Dendritic cell treated with granulocyte-macrophage colony-stimulating factor and Interleukin-4, amounts not matched to agents 40 ng/mL and 50 ng/mL, for 4 days (primary cell): ENCODE measurements at regions of chr11 and their contacts with region 1.

Region 1: GRCh38 chr11:74018331-74019005 is 9.6 kb upstream of the UCP3 start:
- H3K4me3 Mint-ChIP-seq: peak overlapping the region; percentile 35
- H3K27ac Mint-ChIP-seq: no peak overlapping the region
- H3K4me1 Mint-ChIP-seq: no peaks in the 10 kb centered on the region
- H3K27me3 Mint-ChIP-seq: no peaks in the 10 kb centered on the region

Region 2: DNA sequence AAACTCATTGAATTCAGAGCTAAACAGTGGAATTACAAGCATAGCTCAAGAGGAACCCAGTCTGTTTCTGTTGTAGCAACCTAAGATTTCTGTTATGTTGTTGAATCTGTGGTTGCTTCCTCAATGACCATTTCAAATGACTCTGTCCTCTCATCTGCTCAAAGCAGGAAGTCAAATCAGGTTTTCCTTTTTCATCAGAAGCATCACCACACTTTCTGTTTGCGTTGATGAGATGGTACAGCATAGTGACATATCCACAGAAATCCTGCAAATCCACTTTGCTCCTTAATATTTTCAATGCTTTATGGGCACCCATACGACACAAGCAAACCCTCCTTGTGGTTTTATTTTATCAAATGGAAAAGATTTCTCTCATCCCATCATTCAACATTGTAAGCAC is 23.2 kb before region 1 on chr11:
- intact Hi-C with region 1: loop called (anchors 2 kb)
- H3K4me3 Mint-ChIP-seq: no peak overlapping the region
- H3K27ac Mint-ChIP-seq: peak overlapping the region; percentile 75
- H3K4me1 Mint-ChIP-seq: peaks cover 5% of the 10 kb centered on the region
- H3K27me3 Mint-ChIP-seq: no peaks in the 10 kb centered on the region